Esophagus squamous epithelium (tissue), 5 donors: ENCODE measurements at regions of chr17 and their contacts with region 1.

Region 1: GRCh38 chr17:1628856-1629646 is 417 bp upstream of the SLC43A2 start:
- DNase-seq: peak; percentile 81
- H3K4me3 ChIP-seq: peak overlapping the region; percentile 60 to 96 (median 74)
- H3K27ac ChIP-seq: peak overlapping the region; percentile 76 to 95 (median 88)
- H3K4me1 ChIP-seq: peaks cover 20 to 67% (median 28%) of the 10 kb centered on the region in 3 donors
- H3K27me3 ChIP-seq: peaks cover 0 to 25% (median 0%) of the 10 kb centered on the region in 4 donors
- CTCF ChIP-seq: peak in 5 of 6 experiments; percentile 22 to 48 (median 37)
- POLR2A ChIP-seq: peak in 1 of 4 donors; percentile 65

Region 2: GRCh38 chr17:1488030-1488863 is 140.8 kb before region 1 on chr17:
- intact Hi-C with region 1: no loop called
- DNase-seq: no peak
- H3K4me3 ChIP-seq: peak overlapping the region; percentile 59 to 94 (median 62)
- H3K27ac ChIP-seq: peak overlapping the region; percentile 94 to 98 (median 96)
- H3K4me1 ChIP-seq: peaks cover 56 to 87% (median 57%) of the 10 kb centered on the region in 3 donors
- H3K27me3 ChIP-seq: no peaks in the 10 kb centered on the region
- CTCF ChIP-seq: peak in 4 of 6 experiments; percentile 7 to 27 (median 10)
- POLR2A ChIP-seq: peak in 2 of 4 donors; percentile 32 to 69

Region 3: GRCh38 chr17:1573916-1574696 is 54.9 kb before region 1 on chr17:
- intact Hi-C with region 1: loop called (anchors 2 kb)
- DNase-seq: no peak
- H3K4me3 ChIP-seq: peak overlapping the region in 1 of 4 donors; percentile 33
- H3K27ac ChIP-seq: peak overlapping the region in 3 of 4 donors; percentile 55 to 81 (median 60)
- H3K4me1 ChIP-seq: peaks cover 32 to 54% (median 40%) of the 10 kb centered on the region in 3 donors
- H3K27me3 ChIP-seq: no peaks in the 10 kb centered on the region
- CTCF ChIP-seq: peak; percentile 87 to 98 (median 96)
- POLR2A ChIP-seq: no peak

Region 4: GRCh38 chr17:1746975-1747543 is 118.0 kb after region 1 on chr17:
- intact Hi-C with region 1: no loop called
- DNase-seq: no peak
- H3K4me3 ChIP-seq: peak overlapping the region in 3 of 4 donors; percentile 3 to 17 (median 6)
- H3K27ac ChIP-seq: peak overlapping the region; percentile 71 to 87 (median 80)
- H3K4me1 ChIP-seq: peaks cover 11 to 73% (median 25%) of the 10 kb centered on the region in 3 donors
- H3K27me3 ChIP-seq: no peaks in the 10 kb centered on the region
- CTCF ChIP-seq: peak in 1 of 6 experiments; percentile 33
- POLR2A ChIP-seq: peak in 1 of 4 donors; percentile 10

Region 5: GRCh38 chr17:1920948-1921351 is 291.9 kb after region 1 on chr17:
- intact Hi-C with region 1: no loop called
- DNase-seq: no peak
- H3K4me3 ChIP-seq: no peak overlapping the region
- H3K27ac ChIP-seq: no peak overlapping the region
- H3K4me1 ChIP-seq: no peaks in the 10 kb centered on the region
- H3K27me3 ChIP-seq: peaks cover 0 to 14% (median 0%) of the 10 kb centered on the region in 4 donors
- CTCF ChIP-seq: no peak
- POLR2A ChIP-seq: no peak